Activated naive CD4-positive, alpha-beta T cell treated with anti-CD3 and anti-CD28 coated beads for 36 hours (primary cell): ENCODE measurements at regions of chr15 and their contacts with region 1.

Region 1: GRCh38 chr15:65638681-65639089 is 16.9 kb downstream of the SLC24A1 start:
- DNase-seq: peak; percentile 53
- H3K4me3 Mint-ChIP-seq: no peak overlapping the region
- H3K27ac Mint-ChIP-seq: no peak overlapping the region
- H3K4me1 Mint-ChIP-seq: peaks cover 8% of the 10 kb centered on the region
- H3K27me3 Mint-ChIP-seq: no peaks in the 10 kb centered on the region

Region 2: GRCh38 chr15:65856821-65857455 is 218.3 kb after region 1 on chr15:
- CTCF ChIA-PET with region 1: interaction called, 36 read pairs
- intact Hi-C with region 1: loop called (anchors 1 kb)
- DNase-seq: peak; percentile 91
- H3K4me3 Mint-ChIP-seq: no peak overlapping the region
- H3K27ac Mint-ChIP-seq: no peak overlapping the region
- H3K4me1 Mint-ChIP-seq: peaks cover 11% of the 10 kb centered on the region
- H3K27me3 Mint-ChIP-seq: no peaks in the 10 kb centered on the region

Region 3: DNA sequence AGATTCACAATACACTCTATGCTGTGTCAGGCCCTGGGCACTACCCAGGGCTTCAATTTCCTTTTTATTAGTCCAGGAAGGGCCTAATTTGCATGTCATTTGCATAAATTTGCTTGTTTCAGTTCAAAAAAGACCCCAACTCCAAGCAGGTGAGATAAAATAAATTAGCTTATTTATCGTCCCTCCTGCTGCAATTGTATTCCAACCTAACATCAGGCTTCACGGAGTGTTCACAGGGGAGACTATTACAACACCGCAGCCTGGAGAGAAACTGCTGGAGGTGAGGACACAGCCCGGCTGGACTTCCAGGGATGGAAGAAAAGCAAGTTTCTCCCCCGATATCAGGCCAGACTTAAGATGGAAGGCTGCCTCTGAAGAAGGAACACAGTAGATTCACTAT is 552.1 kb after region 1 on chr15:
- CTCF ChIA-PET with region 1: interaction called, 3 read pairs
- intact Hi-C with region 1: loop called (anchors 1 kb)
- DNase-seq: no peak
- H3K4me3 Mint-ChIP-seq: no peak overlapping the region
- H3K27ac Mint-ChIP-seq: no peak overlapping the region
- H3K4me1 Mint-ChIP-seq: no peaks in the 10 kb centered on the region
- H3K27me3 Mint-ChIP-seq: peaks cover 1% of the 10 kb centered on the region